ENCODE measurements at regions of chr7 and their contacts with region 1.

Region 1: GRCh38 chr7:30412810-30413504 is 65.6 kb downstream of the NOD1 start:
- DNase-seq: peak; percentile 88
- ATAC-seq: peak; percentile 93
- H3K4me3 ChIP-seq: no peak overlapping the region
- H3K27ac ChIP-seq: no peak overlapping the region
- H3K4me1 ChIP-seq: peaks cover 19% of the 10 kb centered on the region
- H3K27me3 ChIP-seq: no peaks in the 10 kb centered on the region
- CTCF ChIP-seq: peak; percentile 84
- EP300 ChIP-seq: no peak
- POLR2A ChIP-seq: no peak
- RAD21 ChIP-seq: peak; percentile 75; the same call in 1 of the 2 replicates

Region 2: GRCh38 chr7:30164567-30164966 is 248.4 kb before region 1 on chr7:
- CTCF ChIA-PET with region 1: interaction called, 14 read pairs
- POLR2A ChIA-PET with region 1: no interaction called
- in situ Hi-C with region 1: loop called (anchors 5 kb)
- intact Hi-C with region 1: loop called (anchors 2 kb)
- DNase-seq: peak; percentile 60
- ATAC-seq: peak; percentile 50
- H3K4me3 ChIP-seq: no peak overlapping the region
- H3K27ac ChIP-seq: no peak overlapping the region
- H3K4me1 ChIP-seq: peaks cover 60% of the 10 kb centered on the region
- H3K27me3 ChIP-seq: no peaks in the 10 kb centered on the region
- CTCF ChIP-seq: peak; percentile 71
- EP300 ChIP-seq: no peak
- POLR2A ChIP-seq: no peak
- RAD21 ChIP-seq: peak; percentile 72

Region 3: GRCh38 chr7:30232391-30232790 is 180.6 kb before region 1 on chr7:
- CTCF ChIA-PET with region 1: interaction called, 24 read pairs
- POLR2A ChIA-PET with region 1: no interaction called
- in situ Hi-C with region 1: loop called (anchors 5 kb)
- intact Hi-C with region 1: loop called (anchors 2 kb)
- DNase-seq: no peak
- ATAC-seq: no peak
- H3K4me3 ChIP-seq: no peak overlapping the region
- H3K27ac ChIP-seq: no peak overlapping the region
- H3K4me1 ChIP-seq: no peaks in the 10 kb centered on the region
- H3K27me3 ChIP-seq: no peaks in the 10 kb centered on the region
- CTCF ChIP-seq: no peak
- EP300 ChIP-seq: no peak
- POLR2A ChIP-seq: no peak
- RAD21 ChIP-seq: no peak

Region 4: GRCh38 chr7:30276203-30276900 is 136.6 kb before region 1 on chr7:
- CTCF ChIA-PET with region 1: interaction called, 13 read pairs
- POLR2A ChIA-PET with region 1: no interaction called
- in situ Hi-C with region 1: loop called (anchors 5 kb)
- intact Hi-C with region 1: loop called (anchors 2 kb)
- DNase-seq: peak; percentile 67
- ATAC-seq: peak; percentile 93
- H3K4me3 ChIP-seq: no peak overlapping the region
- H3K27ac ChIP-seq: no peak overlapping the region
- H3K4me1 ChIP-seq: peaks cover 48% of the 10 kb centered on the region
- H3K27me3 ChIP-seq: no peaks in the 10 kb centered on the region
- CTCF ChIP-seq: peak; percentile 88
- EP300 ChIP-seq: peak in 1 of 2 experiments; percentile 34; a peak in 2 of 4 replicates
- POLR2A ChIP-seq: no peak
- RAD21 ChIP-seq: peak; percentile 76

Region 5: DNA sequence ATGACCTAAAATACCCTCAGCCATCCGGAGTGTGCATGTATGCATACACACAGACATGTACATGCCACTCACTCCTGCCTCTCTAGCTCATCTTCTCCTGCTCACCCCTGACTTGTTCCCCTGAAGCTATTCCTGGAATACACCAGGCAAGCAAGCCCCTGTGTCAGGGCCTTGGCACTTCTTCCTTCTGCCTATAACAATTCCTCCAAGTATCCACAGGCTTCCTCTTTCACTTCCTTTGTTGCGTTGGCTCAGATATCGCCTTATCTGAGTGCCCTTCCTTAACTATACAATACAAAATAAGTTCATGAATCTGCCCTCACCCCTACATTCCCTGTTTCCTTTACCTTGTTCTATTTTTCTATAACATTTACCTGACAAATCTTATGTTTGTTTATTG is 23.2 kb before region 1 on chr7:
- CTCF ChIA-PET with region 1: no interaction called
- POLR2A ChIA-PET with region 1: no interaction called
- in situ Hi-C with region 1: no loop called
- intact Hi-C with region 1: no loop called
- DNase-seq: no peak
- ATAC-seq: no peak
- H3K4me3 ChIP-seq: no peak overlapping the region
- H3K27ac ChIP-seq: no peak overlapping the region
- H3K4me1 ChIP-seq: no peaks in the 10 kb centered on the region
- H3K27me3 ChIP-seq: no peaks in the 10 kb centered on the region
- CTCF ChIP-seq: no peak
- EP300 ChIP-seq: no peak
- POLR2A ChIP-seq: no peak
- RAD21 ChIP-seq: no peak